Dorsolateral prefrontal cortex (tissue), 120 donors: ENCODE measurements at regions of chr13 and their contacts with region 1.

Region 1: GRCh38 chr13:51803422-51804294 is at the start of gene DHRS12:
- DNase-seq: peak; percentile 80 to 93 (median 89)
- H3K4me3 ChIP-seq: peak within 1 kb of the TSS; percentile 57 to 96 (median 84)
- H3K27ac ChIP-seq: peak within 1 kb of the TSS; percentile 95 to 100 (median 99)
- H3K27me3 ChIP-seq: no peaks in the 10 kb centered on the region
- CTCF ChIP-seq: peak in 20 of 56 donors; percentile 4 to 47 (median 15)
- total RNA-seq, gene DHRS12: 4.6 to 21.3 (median 12.8) TPM

Region 2: GRCh38 chr13:51435002-51435578 is 368.6 kb before region 1 on chr13:
- intact Hi-C with region 1: loop called in 1 of 2 experiments (anchors 5 kb)
- DNase-seq: no peak
- H3K4me3 ChIP-seq: no peak overlapping the region
- H3K27ac ChIP-seq: no peak overlapping the region
- H3K27me3 ChIP-seq: no peaks in the 10 kb centered on the region
- CTCF ChIP-seq: peak; percentile 20 to 72 (median 54)

Region 3: GRCh38 chr13:51583875-51584730 is 219.6 kb before region 1 on chr13 and contains the start of gene WDFY2:
- intact Hi-C with region 1: loop called (anchors 1 to 5 kb)
- DNase-seq: peak; percentile 97 to 99 (median 99)
- H3K4me3 ChIP-seq: peak within 1 kb of the TSS; percentile 68 to 100 (median 93)
- H3K27ac ChIP-seq: peak within 1 kb of the TSS; percentile 75 to 98 (median 94)
- H3K27me3 ChIP-seq: no peaks in the 10 kb centered on the region
- CTCF ChIP-seq: peak in 55 of 56 donors; percentile 19 to 74 (median 59)
- total RNA-seq, gene WDFY2: 10.9 to 39.0 (median 19.4) TPM

Region 4: GRCh38 chr13:51764184-51765141 is 39.2 kb before region 1 on chr13:
- intact Hi-C with region 1: loop called in 1 of 2 experiments (anchors 5 kb)
- DNase-seq: peak in 9 of 10 donors; percentile 43 to 78 (median 65)
- H3K4me3 ChIP-seq: peak overlapping the region in 14 of 59 donors; percentile 3 to 45 (median 16)
- H3K27ac ChIP-seq: peak overlapping the region; percentile 55 to 94 (median 88)
- H3K27me3 ChIP-seq: no peaks in the 10 kb centered on the region
- CTCF ChIP-seq: peak in 8 of 56 donors; percentile 4 to 33 (median 18)